ENCODE measurements at regions of chr9 and their contacts with region 1.

Region 1: GRCh38 chr9:20854444-20854843 is 170.4 kb downstream of the FOCAD start:
- DNase-seq: no peak
- ATAC-seq: no peak
- H3K4me3 Mint-ChIP-seq: no peak overlapping the region
- H3K27ac Mint-ChIP-seq: no peak overlapping the region
- H3K4me1 Mint-ChIP-seq: no peaks in the 10 kb centered on the region
- H3K27me3 Mint-ChIP-seq: no peaks in the 10 kb centered on the region
- CTCF ChIP-seq: no peak

Region 2: DNA sequence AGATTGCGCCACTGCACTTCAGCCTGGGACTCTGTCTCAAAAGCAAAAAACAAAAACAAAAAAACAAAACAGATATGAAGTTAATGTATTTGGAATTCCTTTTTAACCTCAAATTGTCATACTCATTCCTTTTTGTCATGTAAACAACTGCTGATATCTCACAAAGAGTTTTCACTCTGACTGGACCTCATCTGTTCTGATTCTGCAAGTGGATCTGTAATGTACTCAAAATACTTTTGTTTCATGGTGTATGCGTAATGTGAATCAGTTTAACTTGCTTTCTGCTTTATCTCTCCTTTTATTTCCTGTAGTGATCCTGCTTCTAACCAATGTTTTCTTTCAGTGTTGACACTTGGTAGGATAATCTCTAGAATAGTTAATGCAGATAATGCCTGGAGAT is 63.7 kb before region 1 on chr9:
- CTCF ChIA-PET with region 1: no interaction called
- POLR2A ChIA-PET with region 1: no interaction called
- intact Hi-C with region 1: loop called (anchors 10 kb)
- DNase-seq: no peak
- ATAC-seq: no peak
- H3K4me3 Mint-ChIP-seq: no peak overlapping the region
- H3K27ac Mint-ChIP-seq: no peak overlapping the region
- H3K4me1 Mint-ChIP-seq: no peaks in the 10 kb centered on the region
- H3K27me3 Mint-ChIP-seq: no peaks in the 10 kb centered on the region
- CTCF ChIP-seq: no peak

Region 3: GRCh38 chr9:21110708-21111576 is 256.5 kb after region 1 on chr9:
- CTCF ChIA-PET with region 1: no interaction called
- POLR2A ChIA-PET with region 1: no interaction called
- intact Hi-C with region 1: no loop called
- DNase-seq: no peak
- ATAC-seq: peak; percentile 71
- H3K4me3 Mint-ChIP-seq: no peak overlapping the region
- H3K27ac Mint-ChIP-seq: no peak overlapping the region
- H3K4me1 Mint-ChIP-seq: no peaks in the 10 kb centered on the region
- H3K27me3 Mint-ChIP-seq: peaks cover 5% of the 10 kb centered on the region
- CTCF ChIP-seq: no peak

Region 4: DNA sequence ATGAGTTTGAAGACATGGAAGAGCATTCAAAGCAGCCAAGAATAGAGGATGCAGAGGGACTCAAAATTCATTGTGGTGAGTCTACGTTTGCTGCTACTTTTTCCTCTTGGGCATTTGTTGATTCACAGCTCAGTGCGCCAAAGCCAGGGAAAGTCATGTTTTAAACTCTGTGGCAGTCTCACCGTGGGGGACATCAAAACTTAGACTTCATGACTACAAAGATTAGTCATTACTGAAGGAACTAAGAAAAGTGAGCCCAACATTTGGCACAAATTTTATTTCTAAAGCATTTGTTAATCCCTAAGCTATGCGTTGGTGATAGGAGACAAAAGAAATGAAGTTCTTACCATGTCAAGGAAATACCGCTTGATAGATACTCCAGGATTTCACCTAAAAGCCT is 874.3 kb after region 1 on chr9:
- CTCF ChIA-PET with region 1: no interaction called
- POLR2A ChIA-PET with region 1: no interaction called
- intact Hi-C with region 1: no loop called
- DNase-seq: no peak
- ATAC-seq: no peak
- H3K4me3 Mint-ChIP-seq: no peak overlapping the region
- H3K27ac Mint-ChIP-seq: no peak overlapping the region
- H3K4me1 Mint-ChIP-seq: no peaks in the 10 kb centered on the region
- H3K27me3 Mint-ChIP-seq: peaks cover 10% of the 10 kb centered on the region
- CTCF ChIP-seq: no peak